Activated T-helper 2 cell treated with anti-CD3 and anti-CD28 coated beads, Interferon-gamma antibody, Interleukin-2, Interleukin-4, amounts not matched to agents 10 μg/mL and 5 μg/mL and 100 μg/mL, durations not matched to agents 14 hours and 24 hours and 36 hours (primary cell): ENCODE measurements at regions of chr4 and their contacts with region 1.

Region 1: GRCh38 chr4:118076958-118077766 is 42.9 kb downstream of the NDST3 start:
- DNase-seq: no peak
- H3K4me3 Mint-ChIP-seq: no peak overlapping the region
- H3K27ac Mint-ChIP-seq: no peak overlapping the region
- H3K4me1 Mint-ChIP-seq: peaks cover 12% of the 10 kb centered on the region
- H3K27me3 Mint-ChIP-seq: peaks cover 7% of the 10 kb centered on the region

Region 2: DNA sequence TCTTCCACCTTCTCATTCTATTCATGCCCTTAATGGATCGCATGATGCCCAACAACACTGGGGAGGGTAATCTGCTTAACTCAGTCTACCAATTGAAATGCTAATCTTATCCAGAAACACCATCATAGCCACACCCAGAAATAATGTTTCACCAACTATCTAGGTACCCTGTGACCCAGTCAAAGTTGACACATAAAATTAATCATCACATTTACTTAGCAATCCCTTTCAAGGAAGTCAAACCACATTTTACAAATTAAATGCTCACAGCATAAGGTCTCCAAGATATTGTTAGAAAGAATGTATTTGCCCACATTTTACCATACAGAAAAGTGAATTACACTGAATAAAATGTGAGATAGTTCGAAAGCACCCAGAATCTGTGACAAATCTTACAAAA is 183.1 kb after region 1 on chr4:
- intact Hi-C with region 1: no loop called
- DNase-seq: no peak
- H3K4me3 Mint-ChIP-seq: no peak overlapping the region
- H3K27ac Mint-ChIP-seq: no peak overlapping the region
- H3K4me1 Mint-ChIP-seq: no peaks in the 10 kb centered on the region
- H3K27me3 Mint-ChIP-seq: peaks cover 19% of the 10 kb centered on the region

Region 3: DNA sequence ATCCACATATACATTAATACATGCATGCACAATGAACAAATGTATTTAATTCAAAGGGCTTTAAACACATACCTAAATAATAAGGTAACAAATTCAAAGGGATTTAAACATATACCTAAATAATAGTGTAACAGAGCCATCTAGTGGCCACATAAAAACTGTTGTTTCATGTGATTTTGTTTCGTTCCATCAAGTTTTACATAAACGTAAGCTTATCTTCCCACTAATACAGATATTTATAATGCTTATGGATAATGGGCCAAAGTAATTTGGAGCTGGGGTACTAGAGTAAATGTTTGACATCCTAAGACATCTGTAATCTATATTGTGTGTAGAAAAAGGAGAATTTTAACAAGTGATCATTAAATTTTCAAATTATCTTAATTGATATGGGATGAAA is 193.3 kb after region 1 on chr4:
- intact Hi-C with region 1: loop called (anchors 2 kb)
- DNase-seq: no peak
- H3K4me3 Mint-ChIP-seq: no peak overlapping the region
- H3K27ac Mint-ChIP-seq: no peak overlapping the region
- H3K4me1 Mint-ChIP-seq: peaks cover 2% of the 10 kb centered on the region
- H3K27me3 Mint-ChIP-seq: peaks cover 4% of the 10 kb centered on the region